ENCODE measurements at regions of chr1 and their contacts with region 1.

Region 1: GRCh38 chr1:46340404-46341221 is at the start of gene NSUN4:
- DNase-seq: peak; percentile 85 to 95
- ATAC-seq: peak; percentile 87 to 95 (median 88)
- H3K4me3 ChIP-seq: peak within 1 kb of the TSS; percentile 84
- H3K4me3 Mint-ChIP-seq: peak within 1 kb of the TSS; percentile 100
- H3K27ac ChIP-seq: peak within 1 kb of the TSS; percentile 97
- H3K27ac Mint-ChIP-seq: peak within 1 kb of the TSS; percentile 99
- H3K4me1 ChIP-seq: peaks cover 18% of the 10 kb centered on the region
- H3K4me1 Mint-ChIP-seq: peaks cover 33 to 43% of the 10 kb centered on the region in 2 donors
- H3K27me3 ChIP-seq: no peaks in the 10 kb centered on the region
- H3K27me3 Mint-ChIP-seq: no peaks in the 10 kb centered on the region
- CTCF ChIP-seq: peak; percentile 74
- total RNA-seq, gene NSUN4: 25.9 to 41.0 (median 36.3) TPM

Region 2: DNA sequence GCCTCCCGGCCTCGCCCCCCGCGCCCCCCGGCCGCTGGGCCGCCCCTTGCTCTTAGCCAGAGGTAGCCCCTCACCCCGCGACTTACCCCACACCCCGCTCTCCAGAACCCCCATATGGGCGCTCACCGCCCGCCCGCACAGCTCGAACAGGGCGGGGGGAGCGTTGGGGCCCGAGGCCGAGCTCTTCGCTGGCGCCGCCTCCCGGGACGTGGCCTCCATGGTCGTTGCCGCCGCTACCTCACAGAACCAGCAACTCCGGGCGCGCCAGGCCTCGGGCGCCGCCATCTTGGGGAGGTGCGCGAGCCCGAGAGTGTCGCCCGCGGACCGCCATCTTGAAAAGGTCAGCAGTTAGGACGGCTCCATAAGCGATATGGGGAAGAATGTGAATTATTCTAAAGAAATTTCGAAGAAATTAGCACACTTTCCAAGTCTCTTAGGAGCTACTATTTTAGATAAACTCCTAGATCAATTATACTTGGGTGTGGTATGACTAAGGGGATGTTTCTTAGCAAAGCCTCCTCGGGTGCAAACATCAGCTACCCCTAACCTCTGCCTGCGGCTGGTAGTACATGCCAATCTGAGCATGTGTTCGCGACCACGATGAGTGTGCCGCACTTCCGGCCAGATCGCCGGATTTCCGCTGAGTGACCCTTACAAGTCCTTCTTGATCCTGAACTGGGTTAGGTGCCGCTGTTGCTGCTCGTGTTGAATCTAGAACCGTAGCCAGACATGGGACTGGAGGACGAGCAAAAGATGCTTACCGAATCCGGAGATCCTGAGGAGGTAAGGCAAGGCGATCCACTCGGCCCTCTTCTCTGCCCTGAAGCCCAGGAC is 37.4 kb before region 1 on chr1 and contains the starts of genes LRRC41 and UQCRH:
- intact Hi-C with region 1: loop called (anchors 1 kb)
- DNase-seq: peak; percentile 95 to 96
- ATAC-seq: peak; percentile 80 to 95 (median 86)
- H3K4me3 ChIP-seq: peak within 1 kb of the TSS; percentile 72
- H3K4me3 Mint-ChIP-seq: peak within 1 kb of the TSS; percentile 98
- H3K27ac ChIP-seq: peak within 1 kb of the TSS; percentile 89
- H3K27ac Mint-ChIP-seq: peak within 1 kb of the TSS; percentile 96 to 99
- H3K4me1 ChIP-seq: peaks cover 33% of the 10 kb centered on the region
- H3K4me1 Mint-ChIP-seq: peaks cover 33 to 51% of the 10 kb centered on the region in 2 donors
- H3K27me3 ChIP-seq: no peaks in the 10 kb centered on the region
- H3K27me3 Mint-ChIP-seq: no peaks in the 10 kb centered on the region
- CTCF ChIP-seq: no peak
- total RNA-seq, gene LRRC41: 35.0 to 43.9 (median 35.8) TPM
- total RNA-seq, gene UQCRH: 91.1 to 120 (median 107) TPM

Region 3: GRCh38 chr1:46352363-46352762 is 11.8 kb after region 1 on chr1:
- intact Hi-C with region 1: no loop called
- DNase-seq: no peak
- ATAC-seq: no peak
- H3K4me3 ChIP-seq: no peak overlapping the region
- H3K4me3 Mint-ChIP-seq: no peak overlapping the region
- H3K27ac ChIP-seq: no peak overlapping the region
- H3K27ac Mint-ChIP-seq: no peak overlapping the region
- H3K4me1 ChIP-seq: no peaks in the 10 kb centered on the region
- H3K4me1 Mint-ChIP-seq: peaks cover 0 to 6% of the 10 kb centered on the region in 2 donors
- H3K27me3 ChIP-seq: no peaks in the 10 kb centered on the region
- H3K27me3 Mint-ChIP-seq: no peaks in the 10 kb centered on the region
- CTCF ChIP-seq: no peak

Region 4: DNA sequence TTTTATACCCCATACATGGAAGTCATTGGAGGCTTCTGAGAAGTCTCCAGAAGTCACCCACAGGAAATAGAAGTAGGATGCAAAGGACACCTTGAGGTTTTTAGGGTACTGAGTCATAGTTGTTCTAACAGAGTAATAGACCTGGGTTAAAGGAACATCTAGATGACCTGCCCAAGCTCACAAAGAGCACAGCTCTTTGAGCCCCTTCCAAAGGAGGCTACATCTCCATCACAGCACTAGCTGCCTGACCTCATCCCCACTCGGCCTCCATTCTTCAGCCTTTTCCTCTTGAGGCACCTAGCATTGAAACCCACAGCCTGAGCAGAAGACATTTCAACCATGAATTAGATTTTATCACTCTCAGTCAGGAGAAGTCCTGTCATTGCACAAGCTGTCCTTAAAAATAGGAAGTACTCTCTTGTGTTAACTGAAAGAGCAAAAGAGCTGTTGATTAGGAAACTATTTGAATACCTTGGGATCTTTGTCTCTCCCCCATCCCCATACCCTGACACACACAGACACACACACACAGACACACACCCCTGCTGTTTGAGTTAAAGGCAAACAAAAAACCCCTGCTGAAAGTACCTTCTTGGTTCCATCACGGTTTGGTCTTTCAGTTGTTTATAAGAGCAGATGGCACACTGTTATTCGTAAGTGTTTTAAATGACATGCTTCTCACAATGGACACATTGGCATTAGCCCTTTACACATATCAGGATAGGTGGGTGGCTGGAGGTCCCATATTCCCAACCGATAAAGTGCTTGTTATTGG is 241.3 kb after region 1 on chr1:
- intact Hi-C with region 1: no loop called
- DNase-seq: peak in 1 of 2 donors; percentile 17
- ATAC-seq: peak; percentile 38 to 80 (median 58)
- H3K4me3 ChIP-seq: no peak overlapping the region
- H3K4me3 Mint-ChIP-seq: peak overlapping the region; percentile 61
- H3K27ac ChIP-seq: no peak overlapping the region
- H3K27ac Mint-ChIP-seq: peak overlapping the region; percentile 84
- H3K4me1 ChIP-seq: peaks cover 21% of the 10 kb centered on the region
- H3K4me1 Mint-ChIP-seq: peaks cover 24 to 35% of the 10 kb centered on the region in 2 donors
- H3K27me3 ChIP-seq: no peaks in the 10 kb centered on the region
- H3K27me3 Mint-ChIP-seq: no peaks in the 10 kb centered on the region
- CTCF ChIP-seq: no peak